CD4-positive, alpha-beta memory T cell (primary cell): ENCODE measurements at regions of chr21 and their contacts with region 1.

Region 1: GRCh38 chr21:17925000-17925610 is 105.9 kb upstream of the C21orf91 start:
- DNase-seq: peak; percentile 46 to 58 (median 50)
- H3K4me3 ChIP-seq: no peak overlapping the region
- H3K4me3 Mint-ChIP-seq: no peak overlapping the region
- H3K27ac ChIP-seq: no peak overlapping the region
- H3K27ac Mint-ChIP-seq: no peak overlapping the region
- H3K4me1 ChIP-seq: peaks cover 4% of the 10 kb centered on the region
- H3K4me1 Mint-ChIP-seq: peaks cover 0 to 6% (median 2%) of the 10 kb centered on the region in 4 donors
- H3K27me3 ChIP-seq: no peaks in the 10 kb centered on the region
- H3K27me3 Mint-ChIP-seq: peaks cover 0 to 4% of the 10 kb centered on the region in 2 donors

Region 2: GRCh38 chr21:17387030-17387617 is 538.0 kb before region 1 on chr21:
- CTCF ChIA-PET with region 1: interaction called, 3 read pairs
- POLR2A ChIA-PET with region 1: no interaction called
- intact Hi-C with region 1: loop called (anchors 1 kb)
- DNase-seq: peak in 4 of 5 donors; percentile 48 to 63 (median 60)
- H3K4me3 ChIP-seq: no peak overlapping the region
- H3K4me3 Mint-ChIP-seq: no peak overlapping the region
- H3K27ac ChIP-seq: no peak overlapping the region
- H3K27ac Mint-ChIP-seq: no peak overlapping the region
- H3K4me1 ChIP-seq: no peaks in the 10 kb centered on the region
- H3K4me1 Mint-ChIP-seq: no peaks in the 10 kb centered on the region
- H3K27me3 ChIP-seq: no peaks in the 10 kb centered on the region
- H3K27me3 Mint-ChIP-seq: peaks cover 2 to 5% of the 10 kb centered on the region in 2 donors

Region 3: DNA sequence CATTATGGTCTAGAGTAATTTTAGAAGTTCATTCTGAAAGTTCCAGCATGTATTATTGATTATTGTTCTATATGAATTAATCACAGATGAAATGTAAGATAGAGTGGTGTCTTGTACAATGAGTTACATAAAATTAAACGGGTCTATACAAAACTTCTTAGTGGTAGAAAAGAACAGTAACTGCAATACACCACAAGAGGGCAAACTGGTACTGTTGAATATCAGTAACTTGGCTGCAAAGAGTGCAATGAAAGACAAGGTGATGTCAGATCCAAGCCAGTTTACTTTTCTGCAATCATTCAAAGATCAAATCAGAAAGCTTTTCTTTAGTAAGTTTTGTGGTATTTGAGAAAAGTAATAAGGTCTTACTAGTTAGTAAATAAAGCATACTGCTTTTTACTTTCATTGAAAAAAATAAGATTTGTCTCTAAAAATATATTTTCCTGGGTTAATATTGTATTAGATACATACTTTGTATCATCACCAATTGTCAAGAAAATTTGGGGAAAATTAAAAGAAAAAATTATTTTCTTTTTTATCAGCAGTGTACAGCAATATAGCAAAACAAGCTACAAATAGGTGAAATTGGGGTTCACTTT is 246.0 kb before region 1 on chr21:
- CTCF ChIA-PET with region 1: interaction called, 49 read pairs
- POLR2A ChIA-PET with region 1: no interaction called
- intact Hi-C with region 1: loop called (anchors 1 kb)
- DNase-seq: peak; percentile 40 to 70 (median 66)
- H3K4me3 ChIP-seq: no peak overlapping the region
- H3K4me3 Mint-ChIP-seq: no peak overlapping the region
- H3K27ac ChIP-seq: no peak overlapping the region
- H3K27ac Mint-ChIP-seq: no peak overlapping the region
- H3K4me1 ChIP-seq: no peaks in the 10 kb centered on the region
- H3K4me1 Mint-ChIP-seq: no peaks in the 10 kb centered on the region
- H3K27me3 ChIP-seq: no peaks in the 10 kb centered on the region
- H3K27me3 Mint-ChIP-seq: no peaks in the 10 kb centered on the region

Region 4: DNA sequence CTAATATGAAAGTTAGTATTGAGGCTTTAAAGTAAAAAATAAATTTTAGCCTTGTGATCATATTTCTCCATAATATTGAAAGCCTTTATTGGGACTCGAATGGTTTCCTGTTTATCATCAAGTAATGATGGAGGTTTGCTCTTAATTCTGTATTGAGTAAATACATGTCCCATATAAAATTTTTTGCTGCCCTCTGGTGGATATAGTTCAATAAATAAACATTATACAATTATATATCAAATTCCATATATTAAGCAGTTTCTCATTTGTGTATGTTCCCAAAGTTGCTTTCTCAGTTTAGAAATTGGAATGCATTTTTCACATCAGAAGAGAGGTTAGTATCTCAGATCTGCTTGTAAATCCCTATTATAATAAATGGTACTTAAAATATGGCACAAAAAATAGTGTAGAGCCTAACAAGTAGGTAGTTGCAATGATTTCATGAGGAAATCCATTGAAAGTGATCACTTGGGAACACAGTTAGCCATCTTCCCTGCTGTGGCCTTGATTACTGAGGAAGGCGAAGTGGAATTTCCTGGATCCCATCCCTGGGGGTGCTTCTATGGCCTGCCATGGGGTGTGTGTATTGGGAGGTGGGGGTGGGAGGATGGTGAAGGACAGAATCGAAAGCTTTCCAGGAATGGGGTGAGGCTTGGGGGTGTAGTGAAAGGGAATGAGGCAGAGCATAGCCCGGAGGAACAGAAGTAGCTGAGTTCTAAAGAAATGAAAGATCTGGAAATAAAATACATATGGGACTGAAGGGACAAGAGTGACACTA is 21.9 kb before region 1 on chr21:
- CTCF ChIA-PET with region 1: interaction called, 26 read pairs
- POLR2A ChIA-PET with region 1: no interaction called
- intact Hi-C with region 1: no loop called
- DNase-seq: peak in 4 of 5 donors; percentile 52 to 57 (median 56)
- H3K4me3 ChIP-seq: no peak overlapping the region
- H3K4me3 Mint-ChIP-seq: no peak overlapping the region
- H3K27ac ChIP-seq: no peak overlapping the region
- H3K27ac Mint-ChIP-seq: no peak overlapping the region
- H3K4me1 ChIP-seq: peaks cover 5% of the 10 kb centered on the region
- H3K4me1 Mint-ChIP-seq: peaks cover 5 to 7% (median 6%) of the 10 kb centered on the region in 4 donors
- H3K27me3 ChIP-seq: no peaks in the 10 kb centered on the region
- H3K27me3 Mint-ChIP-seq: no peaks in the 10 kb centered on the region

Region 5: GRCh38 chr21:17949421-17949820 is 24.3 kb after region 1 on chr21:
- CTCF ChIA-PET with region 1: interaction called, 16 read pairs
- POLR2A ChIA-PET with region 1: no interaction called
- intact Hi-C with region 1: no loop called
- DNase-seq: no peak
- H3K4me3 ChIP-seq: no peak overlapping the region
- H3K4me3 Mint-ChIP-seq: no peak overlapping the region
- H3K27ac ChIP-seq: no peak overlapping the region
- H3K27ac Mint-ChIP-seq: no peak overlapping the region
- H3K4me1 ChIP-seq: no peaks in the 10 kb centered on the region
- H3K4me1 Mint-ChIP-seq: no peaks in the 10 kb centered on the region
- H3K27me3 ChIP-seq: no peaks in the 10 kb centered on the region
- H3K27me3 Mint-ChIP-seq: peaks cover 0 to 2% of the 10 kb centered on the region in 2 donors